ENCODE measurements at regions of chr16 and their contacts with region 1.

Region 1: GRCh38 chr16:71358464-71358998 is at the start of gene CALB2:
- DNase-seq: peak; percentile 20
- ATAC-seq: peak; percentile 93
- H3K4me3 ChIP-seq: peak within 1 kb of the TSS; percentile 20; the same call in 1 of the 2 replicates
- H3K27ac ChIP-seq: no peak within 1 kb of the TSS
- H3K4me1 ChIP-seq: peaks cover 9% of the 10 kb centered on the region
- H3K27me3 ChIP-seq: peaks cover 19% of the 10 kb centered on the region
- CTCF ChIP-seq: peak; percentile 90
- POLR2A ChIP-seq: no peak
- RAD21 ChIP-seq: peak; percentile 75
- total RNA-seq, gene CALB2: 0.18 TPM in 1 of 2 replicates, not detected in the other

Region 2: DNA sequence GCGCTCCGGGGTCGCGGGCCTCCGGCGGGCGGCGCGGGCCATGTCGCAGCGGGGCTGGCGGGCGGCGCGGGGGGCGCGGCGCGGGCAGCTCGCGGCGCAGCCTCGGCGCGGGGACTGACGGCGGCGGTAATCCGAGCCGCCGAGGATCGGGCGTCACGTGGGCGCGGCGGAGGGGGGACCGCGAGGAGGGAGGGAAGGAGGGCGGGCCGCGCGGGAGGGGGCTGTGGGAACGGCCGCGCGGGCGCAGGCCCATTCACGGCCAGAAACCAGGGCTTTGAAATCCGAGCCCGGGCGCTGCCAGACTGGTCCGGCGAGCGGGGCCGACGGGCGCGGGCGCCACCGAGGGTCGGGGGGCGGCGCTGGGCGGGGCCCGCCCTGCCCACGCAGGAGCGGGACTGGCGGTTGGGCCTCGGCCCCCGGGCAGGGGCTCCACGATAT is 672.6 kb before region 1 on chr16 and contains the start of gene MTSS2:
- CTCF ChIA-PET with region 1: no interaction called
- POLR2A ChIA-PET with region 1: no interaction called
- dilution Hi-C with region 1: no loop called
- in situ Hi-C with region 1: loop called (anchors 25 kb)
- intact Hi-C with region 1: loop called (anchors 5 kb)
- DNase-seq: peak; percentile 85
- ATAC-seq: peak; percentile 70
- H3K4me3 ChIP-seq: peak within 1 kb of the TSS; percentile 90
- H3K27ac ChIP-seq: peak within 1 kb of the TSS; percentile 92
- H3K4me1 ChIP-seq: peaks cover 61% of the 10 kb centered on the region
- H3K27me3 ChIP-seq: no peaks in the 10 kb centered on the region
- CTCF ChIP-seq: 0 out of 2 replicates have a peak, but pooled peaks have one; percentile 2
- POLR2A ChIP-seq: no peak
- RAD21 ChIP-seq: no peak
- total RNA-seq, gene MTSS2: 8.9 and 9.1 TPM in 2 replicates

Region 3: GRCh38 chr16:70789226-70789926 is 569.2 kb before region 1 on chr16:
- CTCF ChIA-PET with region 1: no interaction called
- POLR2A ChIA-PET with region 1: no interaction called
- dilution Hi-C with region 1: no loop called
- in situ Hi-C with region 1: loop called (anchors 10 kb)
- intact Hi-C with region 1: no loop called
- DNase-seq: peak; percentile 48
- ATAC-seq: peak; percentile 71
- H3K4me3 ChIP-seq: no peak overlapping the region
- H3K27ac ChIP-seq: no peak overlapping the region
- H3K4me1 ChIP-seq: no peaks in the 10 kb centered on the region; the same call in 1 of the 2 replicates
- H3K27me3 ChIP-seq: no peaks in the 10 kb centered on the region
- CTCF ChIP-seq: no peak
- POLR2A ChIP-seq: no peak
- RAD21 ChIP-seq: no peak

Region 4: GRCh38 chr16:70800781-70801530 is 557.6 kb before region 1 on chr16 and contains the start of gene VAC14:
- CTCF ChIA-PET with region 1: no interaction called
- POLR2A ChIA-PET with region 1: no interaction called
- dilution Hi-C with region 1: no loop called
- in situ Hi-C with region 1: no loop called
- intact Hi-C with region 1: loop called (anchors 5 kb)
- DNase-seq: peak; percentile 79
- ATAC-seq: peak; percentile 92
- H3K4me3 ChIP-seq: peak within 1 kb of the TSS; percentile 85
- H3K27ac ChIP-seq: peak within 1 kb of the TSS; percentile 10
- H3K4me1 ChIP-seq: peaks cover 11% of the 10 kb centered on the region
- H3K27me3 ChIP-seq: no peaks in the 10 kb centered on the region
- CTCF ChIP-seq: no peak
- POLR2A ChIP-seq: peak; percentile 79
- RAD21 ChIP-seq: no peak
- total RNA-seq, gene VAC14: 18.3 and 21.1 TPM in 2 replicates

Region 5: DNA sequence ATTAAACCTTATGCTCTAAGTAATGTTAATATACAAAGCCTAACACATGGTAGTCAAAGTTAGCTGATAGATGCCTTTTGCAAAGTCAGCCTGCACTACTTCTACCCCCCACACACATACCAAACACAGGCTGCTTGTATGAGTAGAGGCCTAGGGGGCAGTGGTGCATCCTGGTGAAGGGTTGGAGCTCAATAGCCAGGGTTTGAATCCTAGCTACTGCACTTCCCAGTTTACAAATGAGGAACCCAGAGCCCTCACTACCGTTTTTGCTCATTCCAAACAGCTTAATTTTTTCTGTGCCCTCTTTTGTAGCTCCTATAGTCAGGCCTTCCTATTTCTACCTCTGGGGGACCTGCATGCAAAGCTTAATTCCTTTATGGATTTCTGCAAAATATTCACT is 109.1 kb before region 1 on chr16:
- CTCF ChIA-PET with region 1: no interaction called
- POLR2A ChIA-PET with region 1: no interaction called
- dilution Hi-C with region 1: no loop called
- in situ Hi-C with region 1: no loop called
- intact Hi-C with region 1: no loop called
- DNase-seq: no peak
- ATAC-seq: no peak
- H3K4me3 ChIP-seq: no peak overlapping the region
- H3K27ac ChIP-seq: no peak overlapping the region
- H3K4me1 ChIP-seq: no peaks in the 10 kb centered on the region
- H3K27me3 ChIP-seq: no peaks in the 10 kb centered on the region
- CTCF ChIP-seq: 0 out of 2 replicates have a peak, but pooled peaks have one; percentile 3
- POLR2A ChIP-seq: no peak
- RAD21 ChIP-seq: no peak

Region 6: GRCh38 chr16:71288890-71289733 is 69.4 kb before region 1 on chr16 and contains the start of gene CMTR2:
- CTCF ChIA-PET with region 1: no interaction called
- POLR2A ChIA-PET with region 1: no interaction called
- dilution Hi-C with region 1: no loop called
- in situ Hi-C with region 1: no loop called
- intact Hi-C with region 1: loop called (anchors 2 kb)
- DNase-seq: peak; percentile 97
- ATAC-seq: peak; percentile 96
- H3K4me3 ChIP-seq: peak within 1 kb of the TSS; percentile 67
- H3K27ac ChIP-seq: peak within 1 kb of the TSS; percentile 79
- H3K4me1 ChIP-seq: no peaks in the 10 kb centered on the region; the same call in 1 of the 2 replicates
- H3K27me3 ChIP-seq: no peaks in the 10 kb centered on the region
- CTCF ChIP-seq: no peak
- POLR2A ChIP-seq: peak; percentile 86
- RAD21 ChIP-seq: no peak
- total RNA-seq, gene CMTR2: 21.9 and 33.6 TPM in 2 replicates

Measured in IMR-90 (cell line).